ENCODE measurements at regions of chr2 and their contacts with region 1.

Region 1: GRCh38 chr2:230602562-230603230 is 109.9 kb upstream of the CAB39 start:
- DNase-seq: peak; percentile 76
- H3K4me3 Mint-ChIP-seq: peak overlapping the region; percentile 8
- H3K27ac Mint-ChIP-seq: peak overlapping the region; percentile 89
- H3K4me1 Mint-ChIP-seq: peaks cover 38% of the 10 kb centered on the region
- H3K27me3 Mint-ChIP-seq: no peaks in the 10 kb centered on the region

Region 2: DNA sequence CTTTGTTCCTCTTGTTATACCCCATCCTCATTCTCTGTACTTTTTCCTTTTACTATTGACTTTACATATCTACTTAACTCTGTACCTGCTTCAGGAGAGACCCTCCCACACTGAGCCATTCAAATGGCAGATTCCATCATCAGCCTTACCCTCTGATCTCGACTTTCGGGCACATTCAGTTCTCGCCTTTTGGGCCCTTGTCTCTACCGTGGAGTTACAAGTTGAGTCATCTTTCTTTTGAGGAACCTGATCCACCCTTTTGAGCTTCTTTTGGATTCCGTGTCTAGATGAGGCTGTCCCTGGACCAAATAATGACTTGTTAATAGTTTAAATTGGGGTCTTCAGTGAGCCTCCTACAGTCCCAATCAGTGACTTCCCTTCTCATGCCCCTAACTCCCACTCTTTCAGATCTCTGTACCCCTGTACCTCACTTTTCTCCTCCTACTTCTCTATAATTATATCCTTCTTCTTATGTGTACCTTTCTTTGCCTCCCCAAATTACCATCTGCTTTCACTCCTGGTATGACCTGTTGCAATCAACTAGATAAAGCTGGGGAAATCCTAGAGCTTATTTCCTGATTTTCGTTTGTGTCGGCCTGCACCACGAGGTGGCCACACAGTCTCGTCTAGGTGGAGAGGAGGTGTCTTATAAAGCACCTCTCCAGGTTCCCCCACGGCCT is 400.1 kb before region 1 on chr2:
- CTCF ChIA-PET with region 1: no interaction called
- intact Hi-C with region 1: no loop called
- DNase-seq: peak; percentile 24
- H3K4me3 Mint-ChIP-seq: no peak overlapping the region
- H3K27ac Mint-ChIP-seq: peak overlapping the region; percentile 67
- H3K4me1 Mint-ChIP-seq: peaks cover 23% of the 10 kb centered on the region
- H3K27me3 Mint-ChIP-seq: no peaks in the 10 kb centered on the region

Region 3: GRCh38 chr2:230319211-230319862 is 283.4 kb before region 1 on chr2:
- CTCF ChIA-PET with region 1: no interaction called
- intact Hi-C with region 1: loop called (anchors 2 kb)
- DNase-seq: peak; percentile 87
- H3K4me3 Mint-ChIP-seq: peak overlapping the region; percentile 55
- H3K27ac Mint-ChIP-seq: peak overlapping the region; percentile 93
- H3K4me1 Mint-ChIP-seq: peaks cover 54% of the 10 kb centered on the region
- H3K27me3 Mint-ChIP-seq: no peaks in the 10 kb centered on the region

Region 4: DNA sequence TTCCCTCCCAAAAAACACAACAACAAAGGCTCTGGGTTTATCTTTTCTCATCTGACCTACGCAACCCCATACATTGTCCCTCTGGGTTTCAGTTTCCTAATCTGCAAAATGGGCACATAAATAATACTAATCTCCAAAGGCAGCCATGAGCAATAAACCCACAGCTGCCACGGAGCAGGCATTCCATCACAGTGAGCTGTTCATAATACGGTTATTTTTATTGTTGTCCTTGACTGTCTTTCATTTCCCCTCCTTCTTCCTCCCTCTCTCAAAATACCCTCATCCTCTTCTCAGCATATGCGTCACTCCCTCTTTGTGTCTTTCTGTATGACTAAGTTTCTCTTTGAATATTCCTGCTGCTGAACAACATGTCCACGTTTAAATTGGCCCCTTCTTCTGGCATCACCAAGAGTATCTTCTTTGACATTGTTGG is 19.8 kb before region 1 on chr2:
- CTCF ChIA-PET with region 1: no interaction called
- intact Hi-C with region 1: loop called (anchors 1 kb)
- DNase-seq: peak; percentile 58
- H3K4me3 Mint-ChIP-seq: no peak overlapping the region
- H3K27ac Mint-ChIP-seq: peak overlapping the region; percentile 38
- H3K4me1 Mint-ChIP-seq: peaks cover 23% of the 10 kb centered on the region
- H3K27me3 Mint-ChIP-seq: no peaks in the 10 kb centered on the region

Region 5: GRCh38 chr2:230589497-230590015 is 13.1 kb before region 1 on chr2:
- CTCF ChIA-PET with region 1: interaction called, 3 read pairs
- intact Hi-C with region 1: loop called (anchors 1 kb)
- DNase-seq: peak; percentile 61
- H3K4me3 Mint-ChIP-seq: no peak overlapping the region
- H3K27ac Mint-ChIP-seq: peak overlapping the region; percentile 65
- H3K4me1 Mint-ChIP-seq: peaks cover 50% of the 10 kb centered on the region
- H3K27me3 Mint-ChIP-seq: no peaks in the 10 kb centered on the region

Region 6: DNA sequence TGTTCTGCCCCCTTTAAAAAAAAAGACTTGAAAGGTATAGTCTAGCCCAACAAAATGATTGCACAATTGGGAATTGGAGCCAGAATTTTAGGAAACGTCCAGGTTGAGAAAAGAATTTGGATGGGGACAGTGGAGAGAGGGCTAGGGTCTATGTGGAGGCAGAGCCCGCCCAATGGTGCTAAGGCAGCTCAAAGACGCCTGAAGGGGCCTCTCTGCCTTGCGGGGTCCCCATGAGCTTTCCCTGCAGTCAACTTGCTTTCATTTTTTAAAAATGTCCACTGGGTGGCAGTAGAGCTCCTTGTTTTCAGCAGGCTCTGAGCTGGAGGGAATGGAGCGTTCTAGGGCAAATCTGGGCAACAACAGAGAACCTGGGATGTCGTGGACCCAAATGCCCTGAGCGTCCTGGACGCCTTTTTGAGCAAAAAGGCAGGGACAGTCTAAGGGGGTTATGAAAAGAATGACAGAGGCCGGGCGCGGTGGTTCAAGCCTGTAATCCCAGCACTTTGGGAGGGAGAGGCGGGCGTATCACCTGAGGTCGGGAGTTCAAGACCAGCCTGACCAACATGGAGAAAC is 221.8 kb after region 1 on chr2:
- CTCF ChIA-PET with region 1: no interaction called
- intact Hi-C with region 1: no loop called
- DNase-seq: peak; percentile 59
- H3K4me3 Mint-ChIP-seq: no peak overlapping the region
- H3K27ac Mint-ChIP-seq: no peak overlapping the region
- H3K4me1 Mint-ChIP-seq: peaks cover 5% of the 10 kb centered on the region
- H3K27me3 Mint-ChIP-seq: peaks cover 27% of the 10 kb centered on the region

Measured in activated naive CD4-positive, alpha-beta T cell treated with anti-CD3 and anti-CD28 coated beads for 36 hours (primary cell).